Posterior vena cava (tissue), 2 donors: ENCODE measurements at regions of chr3 and their contacts with region 1.

Region 1: DNA sequence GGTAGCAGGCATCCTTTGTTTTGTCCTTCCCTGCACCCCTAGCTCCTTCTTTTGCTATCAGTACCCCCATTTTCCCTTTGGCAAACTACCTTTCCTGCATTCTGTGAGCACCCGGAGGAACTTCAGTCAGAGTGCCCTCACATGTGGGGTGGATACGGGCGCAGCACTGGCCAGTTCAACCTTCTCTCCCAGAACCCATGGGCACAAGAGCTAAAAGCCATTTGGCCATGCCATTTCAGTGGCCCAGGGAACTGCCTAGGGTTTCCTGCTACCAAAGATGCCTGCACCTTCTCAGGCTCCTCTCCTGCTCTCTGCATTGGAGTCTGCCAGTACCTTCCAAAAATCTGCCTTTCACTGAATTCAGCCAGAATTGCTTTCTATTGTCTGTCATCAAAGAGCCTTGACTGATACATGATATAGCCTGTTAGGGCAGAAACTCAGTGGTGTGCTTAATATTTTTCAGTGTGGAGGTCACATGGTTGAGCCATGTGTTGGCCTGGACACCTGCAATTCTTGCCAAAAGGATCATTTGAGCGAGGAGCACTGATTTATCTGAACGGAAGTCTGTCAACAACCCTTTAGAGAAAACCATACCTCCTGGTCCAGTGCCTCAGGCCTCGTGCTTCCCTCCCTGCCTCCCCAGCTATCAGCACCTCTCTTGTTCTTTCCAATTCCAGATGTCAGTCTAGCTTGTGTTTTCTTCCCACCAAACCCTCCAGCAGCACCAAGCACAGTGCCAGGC is 27.0 kb upstream of the HHATL start:
- DNase-seq: no peak

Region 2: DNA sequence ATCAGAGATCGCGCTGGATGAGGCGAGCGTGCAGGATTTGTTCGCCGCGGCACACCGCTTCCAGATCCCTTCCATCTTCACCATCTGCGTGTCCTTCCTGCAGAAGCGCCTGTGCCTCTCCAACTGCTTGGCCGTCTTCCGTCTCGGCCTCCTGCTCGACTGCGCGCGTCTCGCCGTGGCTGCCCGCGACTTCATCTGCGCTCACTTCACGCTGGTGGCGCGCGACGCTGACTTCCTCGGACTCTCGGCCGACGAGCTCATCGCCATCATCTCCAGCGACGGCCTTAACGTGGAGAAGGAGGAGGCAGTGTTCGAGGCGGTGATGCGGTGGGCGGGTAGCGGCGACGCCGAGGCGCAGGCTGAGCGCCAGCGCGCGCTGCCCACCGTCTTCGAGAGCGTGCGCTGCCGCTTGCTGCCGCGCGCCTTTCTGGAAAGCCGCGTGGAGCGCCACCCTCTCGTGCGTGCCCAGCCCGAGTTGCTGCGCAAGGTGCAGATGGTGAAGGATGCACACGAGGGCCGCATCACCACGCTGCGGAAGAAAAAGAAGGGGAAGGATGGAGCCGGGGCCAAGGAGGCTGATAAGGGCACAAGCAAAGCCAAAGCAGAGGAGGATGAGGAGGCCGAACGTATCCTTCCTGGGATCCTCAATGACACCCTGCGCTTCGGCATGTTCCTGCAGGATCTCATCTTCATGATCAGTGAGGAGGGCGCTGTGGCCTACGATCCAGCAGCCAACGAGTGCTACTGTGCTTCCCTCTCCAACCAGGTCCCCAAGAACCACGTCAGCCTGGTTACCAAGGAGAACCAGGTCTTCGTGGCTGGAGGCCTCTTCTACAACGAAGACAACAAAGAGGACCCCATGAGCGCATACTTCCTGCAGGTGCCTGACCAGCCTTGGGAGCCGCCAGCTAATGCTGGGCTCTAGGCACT is 43.4 kb before region 1 on chr3:
- intact Hi-C with region 1: loop called in 1 of 2 experiments (anchors 1 kb)
- DNase-seq: peak; percentile 81

Region 3: DNA sequence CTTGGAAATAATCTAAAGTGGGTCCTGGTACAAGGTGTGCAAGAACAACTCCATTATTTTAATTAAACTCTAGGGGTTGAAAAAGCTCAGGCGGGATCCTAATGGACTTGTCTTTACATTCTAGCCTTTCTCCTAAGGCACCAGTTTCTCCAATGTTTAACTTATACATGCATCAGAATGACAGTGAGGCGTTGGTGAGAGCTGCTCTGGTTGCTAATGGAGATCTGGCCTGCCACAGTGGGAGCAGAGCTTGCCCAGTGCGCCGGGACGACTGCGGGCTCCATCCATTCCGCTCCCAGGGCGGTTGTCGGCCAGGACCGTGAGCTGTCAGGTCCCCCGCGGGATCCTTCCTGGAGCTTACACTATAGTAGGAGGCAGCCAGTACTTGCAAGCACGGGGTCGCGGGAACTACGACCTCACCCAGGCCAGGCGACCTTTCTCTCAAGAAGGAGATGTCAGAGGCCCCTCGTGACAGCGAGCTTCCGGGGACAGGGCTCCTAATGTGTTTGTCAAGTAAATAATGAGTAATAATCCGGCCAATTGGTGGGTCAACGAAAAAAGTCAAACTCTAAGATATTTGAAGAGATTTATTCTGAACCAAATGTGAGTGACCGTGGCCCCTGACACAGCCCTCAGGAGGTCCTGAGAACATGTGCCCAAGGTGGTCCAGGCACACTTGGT is 75.7 kb after region 1 on chr3:
- intact Hi-C with region 1: no loop called
- DNase-seq: peak; percentile 86